ENCODE measurements at regions of chr16 and their contacts with region 1.

Region 1: GRCh38 chr16:25089351-25089750 is 22.2 kb upstream of the LCMT1 start:
- DNase-seq: no peak
- H3K4me3 ChIP-seq: no peak overlapping the region
- H3K27ac ChIP-seq: no peak overlapping the region
- H3K4me1 ChIP-seq: no peaks in the 10 kb centered on the region
- H3K27me3 ChIP-seq: peaks cover under 1% of the 10 kb centered on the region
- CTCF ChIP-seq: no peak

Region 2: DNA sequence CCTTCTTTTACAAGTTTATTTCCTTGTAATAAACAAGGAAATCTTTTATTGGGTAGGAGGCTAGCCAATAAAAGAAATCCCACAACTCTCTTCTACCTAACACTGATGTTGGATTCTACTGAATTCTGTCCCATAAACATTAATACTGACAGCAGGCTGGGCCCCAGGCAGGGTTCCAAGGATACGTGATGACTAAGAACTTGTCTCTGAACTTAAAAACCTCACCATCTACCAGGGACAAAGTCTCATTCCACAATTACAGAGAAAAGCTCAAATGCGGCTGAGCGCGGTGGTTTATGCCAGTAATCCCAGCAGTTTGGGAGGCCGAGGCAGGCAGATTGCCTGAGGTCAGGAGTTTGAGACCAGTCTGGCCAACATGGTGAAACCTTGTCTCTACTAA is 139.1 kb before region 1 on chr16:
- CTCF ChIA-PET with region 1: no interaction called
- dilution Hi-C with region 1: loop called (anchors 10 kb)
- in situ Hi-C with region 1: no loop called
- intact Hi-C with region 1: no loop called
- DNase-seq: no peak
- H3K4me3 ChIP-seq: no peak overlapping the region
- H3K27ac ChIP-seq: no peak overlapping the region
- H3K4me1 ChIP-seq: no peaks in the 10 kb centered on the region
- H3K27me3 ChIP-seq: no peaks in the 10 kb centered on the region
- CTCF ChIP-seq: no peak

Region 3: GRCh38 chr16:25051406-25052150 is 37.8 kb before region 1 on chr16:
- CTCF ChIA-PET with region 1: no interaction called
- dilution Hi-C with region 1: no loop called
- in situ Hi-C with region 1: no loop called
- intact Hi-C with region 1: no loop called
- DNase-seq: peak; percentile 68
- H3K4me3 ChIP-seq: no peak overlapping the region
- H3K27ac ChIP-seq: no peak overlapping the region
- H3K4me1 ChIP-seq: peaks cover 28% of the 10 kb centered on the region
- H3K27me3 ChIP-seq: no peaks in the 10 kb centered on the region
- CTCF ChIP-seq: no peak

Region 4: DNA sequence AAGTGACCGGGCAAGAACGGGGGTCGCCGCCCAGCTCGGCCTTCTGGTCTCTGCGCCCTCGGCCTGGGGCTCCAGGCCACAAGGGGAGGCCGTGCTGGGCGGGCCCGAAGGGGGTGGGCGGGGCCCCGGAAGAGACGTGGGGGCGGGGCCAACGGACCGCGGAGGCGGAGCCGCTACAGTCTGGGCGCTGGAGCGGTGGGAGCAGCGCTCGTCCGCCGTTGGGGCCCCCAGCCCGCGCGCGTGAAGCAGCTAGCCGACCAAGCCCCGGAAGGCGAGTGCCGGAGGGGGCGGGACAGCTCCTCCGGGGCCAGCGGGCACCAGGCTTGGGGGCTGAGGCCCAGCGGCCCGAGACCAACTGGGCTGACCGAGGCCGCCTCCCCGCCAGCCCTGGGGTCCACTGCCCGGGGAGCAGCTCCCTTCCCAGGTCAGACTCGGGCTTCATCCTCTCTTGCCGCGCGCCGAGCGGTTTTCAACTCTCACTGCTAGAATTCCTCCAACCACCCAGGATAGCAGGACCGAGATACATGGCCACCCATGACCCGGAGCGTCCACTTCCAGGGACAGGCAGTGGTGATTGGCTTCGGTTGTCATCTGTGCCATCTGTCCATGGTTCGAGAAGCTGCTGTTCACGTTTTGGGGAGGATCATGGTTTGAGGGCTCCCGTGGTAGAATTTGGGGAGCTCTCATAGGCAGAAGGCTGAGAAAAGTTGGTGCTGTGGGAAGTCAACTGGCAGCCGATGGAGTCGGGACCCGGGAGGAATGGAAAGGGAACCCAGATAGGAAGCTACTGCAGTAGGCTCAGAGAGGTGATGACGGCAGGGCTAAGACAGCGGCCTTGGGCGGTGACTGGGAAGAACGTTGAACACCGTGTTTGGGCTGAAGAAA is 22.4 kb before region 1 on chr16:
- CTCF ChIA-PET with region 1: no interaction called
- dilution Hi-C with region 1: no loop called
- in situ Hi-C with region 1: no loop called
- intact Hi-C with region 1: no loop called
- DNase-seq: peak; percentile 48
- H3K4me3 ChIP-seq: peak overlapping the region; percentile 67 to 69 (median 68)
- H3K27ac ChIP-seq: peak overlapping the region; percentile 25
- H3K4me1 ChIP-seq: peaks cover 2% of the 10 kb centered on the region
- H3K27me3 ChIP-seq: no peaks in the 10 kb centered on the region
- CTCF ChIP-seq: no peak

Region 5: DNA sequence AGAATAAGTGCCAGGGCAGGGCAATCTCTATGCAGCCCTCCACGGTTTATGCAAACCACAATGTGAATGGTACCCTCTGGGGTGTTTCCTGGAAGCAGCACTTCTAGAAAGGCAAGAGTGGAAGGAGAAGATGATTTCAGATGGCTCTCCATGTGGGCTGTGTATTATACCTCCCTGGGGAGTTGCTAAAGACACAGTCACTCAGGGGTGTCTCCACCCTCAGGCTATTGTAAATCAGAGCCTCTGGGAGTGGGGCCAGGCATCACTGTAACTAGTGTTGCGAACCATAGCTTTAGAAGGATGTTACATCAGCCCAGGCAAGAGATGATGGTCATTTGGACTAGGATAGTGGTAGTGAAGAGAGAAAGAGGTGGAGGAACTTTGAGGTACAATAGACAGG is 251.6 kb after region 1 on chr16:
- CTCF ChIA-PET with region 1: no interaction called
- dilution Hi-C with region 1: loop called (anchors 10 kb)
- in situ Hi-C with region 1: no loop called
- intact Hi-C with region 1: no loop called
- DNase-seq: no peak
- H3K4me3 ChIP-seq: no peak overlapping the region
- H3K27ac ChIP-seq: no peak overlapping the region
- H3K4me1 ChIP-seq: no peaks in the 10 kb centered on the region
- H3K27me3 ChIP-seq: no peaks in the 10 kb centered on the region
- CTCF ChIP-seq: no peak